ENCODE measurements at regions of chr7 and their contacts with region 1.

Region 1: GRCh38 chr7:22697876-22698606 is 29.0 kb upstream of the IL6 start:
- DNase-seq: no peak
- ATAC-seq: no peak
- H3K4me3 ChIP-seq: no peak overlapping the region
- H3K27ac ChIP-seq: no peak overlapping the region
- H3K4me1 ChIP-seq: no peaks in the 10 kb centered on the region
- H3K27me3 ChIP-seq: no peaks in the 10 kb centered on the region
- CTCF ChIP-seq: no peak

Region 2: GRCh38 chr7:22205631-22206030 is 492.4 kb before region 1 on chr7:
- CTCF ChIA-PET with region 1: no interaction called
- POLR2A ChIA-PET with region 1: interaction called, 17 read pairs
- in situ Hi-C with region 1: no loop called
- intact Hi-C with region 1: no loop called
- DNase-seq: no peak
- ATAC-seq: no peak
- H3K4me3 ChIP-seq: no peak overlapping the region
- H3K27ac ChIP-seq: no peak overlapping the region
- H3K4me1 ChIP-seq: no peaks in the 10 kb centered on the region
- H3K27me3 ChIP-seq: no peaks in the 10 kb centered on the region
- CTCF ChIP-seq: no peak

Region 3: DNA sequence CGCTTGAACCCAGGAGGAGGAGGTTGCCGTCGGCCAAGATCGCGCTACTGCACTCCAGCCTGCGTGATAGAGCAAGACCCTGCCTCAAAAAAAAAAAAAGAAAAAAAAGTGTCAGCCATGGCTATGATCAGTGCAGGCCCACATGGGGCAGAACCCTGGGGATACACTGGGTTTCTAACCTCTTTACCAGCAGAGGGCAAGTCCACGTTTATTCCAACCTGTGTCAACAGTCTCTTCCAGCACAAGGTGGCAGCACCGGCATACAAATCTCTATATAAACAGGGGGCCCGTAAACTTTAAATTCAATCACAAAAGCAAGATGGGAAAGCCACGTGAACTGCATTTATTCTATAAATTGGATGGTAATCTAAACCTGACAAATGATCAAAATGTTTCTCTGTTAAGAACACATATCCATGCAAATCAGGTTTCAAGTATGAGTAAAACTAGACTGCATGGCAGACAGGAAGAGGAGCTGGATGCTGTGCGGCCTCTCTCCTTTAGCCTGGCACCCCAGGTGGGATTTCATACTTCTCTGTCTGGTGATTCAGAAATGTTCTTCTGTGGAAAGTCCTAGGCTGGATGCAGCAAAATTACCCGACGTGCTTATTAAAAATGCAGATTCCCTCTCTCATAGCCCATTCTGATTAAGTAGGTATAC is 138.1 kb before region 1 on chr7:
- CTCF ChIA-PET with region 1: no interaction called
- POLR2A ChIA-PET with region 1: no interaction called
- in situ Hi-C with region 1: no loop called
- intact Hi-C with region 1: no loop called
- DNase-seq: peak; percentile 86
- ATAC-seq: peak; percentile 66
- H3K4me3 ChIP-seq: no peak overlapping the region
- H3K27ac ChIP-seq: peak overlapping the region; percentile 85; the same call in 1 of the 2 replicates
- H3K4me1 ChIP-seq: peaks cover 44% of the 10 kb centered on the region
- H3K27me3 ChIP-seq: no peaks in the 10 kb centered on the region
- CTCF ChIP-seq: peak; percentile 96

Region 4: DNA sequence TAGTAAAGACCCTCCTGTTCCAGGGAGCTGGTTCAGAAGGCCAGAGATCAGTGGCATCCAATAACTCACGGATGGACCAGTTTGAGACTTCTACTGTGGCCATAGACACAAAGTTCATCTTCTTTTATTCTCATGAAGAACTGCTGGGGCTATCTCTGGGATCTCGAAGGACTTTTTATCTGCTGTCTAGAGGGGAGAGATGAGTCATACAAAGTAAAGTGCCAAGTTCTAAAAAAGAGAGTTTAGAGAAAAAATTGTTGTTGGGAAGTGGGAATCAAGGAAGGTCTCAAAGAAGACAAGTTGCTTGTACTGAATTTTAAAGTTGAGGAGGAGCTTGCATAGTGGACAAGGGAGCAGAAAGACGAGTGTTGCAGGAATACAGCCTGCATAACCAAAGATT is 974.0 kb after region 1 on chr7:
- CTCF ChIA-PET with region 1: no interaction called
- POLR2A ChIA-PET with region 1: interaction called, 12 read pairs
- in situ Hi-C with region 1: no loop called
- intact Hi-C with region 1: no loop called
- DNase-seq: no peak
- ATAC-seq: no peak
- H3K4me3 ChIP-seq: no peak overlapping the region
- H3K27ac ChIP-seq: no peak overlapping the region
- H3K4me1 ChIP-seq: no peaks in the 10 kb centered on the region
- H3K27me3 ChIP-seq: no peaks in the 10 kb centered on the region
- CTCF ChIP-seq: no peak

Measured in Panc1 (cell line).